ENCODE measurements at regions of chr9 and their contacts with region 1.

Region 1: DNA sequence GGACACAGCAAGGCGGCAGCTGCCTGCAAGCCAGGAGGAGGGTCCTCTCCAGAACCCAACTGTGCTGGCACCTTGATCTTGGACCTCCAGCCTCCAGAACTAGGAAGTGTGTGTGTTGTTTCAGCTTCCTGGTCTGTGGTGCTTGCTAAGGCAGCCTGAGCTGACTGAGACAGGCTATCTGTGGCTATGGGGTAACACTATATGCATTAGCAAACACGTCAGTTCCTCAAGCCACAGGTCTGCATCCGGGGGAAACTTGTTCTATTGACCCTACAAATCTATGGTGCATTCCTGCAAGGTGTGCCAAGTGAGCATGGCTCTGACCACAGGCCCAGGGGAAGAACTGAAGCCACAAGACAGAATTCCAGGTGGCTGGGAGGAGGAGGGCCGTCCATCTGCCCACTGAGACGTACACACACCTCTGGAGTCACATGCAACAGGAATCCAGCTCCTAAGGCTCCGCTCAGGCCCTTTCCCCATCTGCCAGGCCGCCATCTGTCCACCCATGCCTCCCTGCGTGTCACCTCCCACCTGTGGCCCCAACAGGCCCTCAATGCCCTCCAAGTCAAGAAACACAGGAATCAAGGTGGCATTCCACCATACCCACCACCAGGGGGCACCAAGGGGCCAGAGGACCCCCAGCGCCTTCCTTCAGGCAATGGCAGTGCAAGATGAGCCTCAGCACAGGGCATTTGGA is 174.9 kb downstream of the ROR2 start:
- DNase-seq: peak; percentile 37
- H3K4me3 ChIP-seq: no peak overlapping the region
- H3K27ac ChIP-seq: no peak overlapping the region
- H3K4me1 ChIP-seq: peaks cover 23% of the 10 kb centered on the region
- H3K27me3 ChIP-seq: no peaks in the 10 kb centered on the region
- CTCF ChIP-seq: peak; percentile 70 to 81

Region 2: DNA sequence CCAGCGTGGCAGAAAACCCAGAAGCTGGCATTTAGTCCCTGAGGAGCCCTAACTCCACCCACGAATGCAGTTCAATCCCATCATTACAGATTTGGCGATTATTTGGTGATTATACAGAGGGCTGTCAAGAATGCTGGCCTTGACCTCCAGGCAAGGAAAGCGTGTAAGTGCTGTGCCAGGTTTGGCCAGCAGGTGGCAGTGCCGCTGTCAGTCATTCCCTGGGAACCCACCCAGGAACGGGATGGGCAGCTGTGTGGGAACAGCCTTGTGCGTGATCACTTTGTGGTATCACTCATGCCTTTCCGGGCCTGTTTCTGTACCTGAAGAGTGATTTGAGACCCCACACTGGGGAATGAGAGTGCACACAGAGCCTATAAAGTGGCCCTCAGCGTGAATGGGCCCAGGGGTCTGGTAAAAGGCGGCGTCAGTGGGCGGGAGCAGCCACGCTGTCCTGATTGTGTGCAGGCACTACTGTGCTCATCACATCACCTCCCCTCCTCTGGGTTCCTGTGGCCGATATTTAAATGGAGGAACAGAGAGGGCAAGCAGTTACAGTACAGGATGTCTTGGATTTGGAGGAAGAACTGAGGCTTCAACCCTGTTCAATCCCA is 40.7 kb before region 1 on chr9:
- CTCF ChIA-PET with region 1: no interaction called
- dilution Hi-C with region 1: no loop called
- in situ Hi-C with region 1: no loop called
- intact Hi-C with region 1: no loop called
- DNase-seq: peak; percentile 14
- H3K4me3 ChIP-seq: no peak overlapping the region
- H3K27ac ChIP-seq: no peak overlapping the region
- H3K4me1 ChIP-seq: no peaks in the 10 kb centered on the region
- H3K27me3 ChIP-seq: no peaks in the 10 kb centered on the region
- CTCF ChIP-seq: peak; percentile 98 to 99

Region 3: GRCh38 chr9:91824601-91825305 is 49.6 kb after region 1 on chr9:
- CTCF ChIA-PET with region 1: no interaction called
- dilution Hi-C with region 1: loop called (anchors 5 kb)
- in situ Hi-C with region 1: no loop called
- intact Hi-C with region 1: no loop called
- DNase-seq: no peak
- H3K4me3 ChIP-seq: no peak overlapping the region
- H3K27ac ChIP-seq: no peak overlapping the region
- H3K4me1 ChIP-seq: peaks cover 6% of the 10 kb centered on the region
- H3K27me3 ChIP-seq: no peaks in the 10 kb centered on the region
- CTCF ChIP-seq: no peak

Region 4: DNA sequence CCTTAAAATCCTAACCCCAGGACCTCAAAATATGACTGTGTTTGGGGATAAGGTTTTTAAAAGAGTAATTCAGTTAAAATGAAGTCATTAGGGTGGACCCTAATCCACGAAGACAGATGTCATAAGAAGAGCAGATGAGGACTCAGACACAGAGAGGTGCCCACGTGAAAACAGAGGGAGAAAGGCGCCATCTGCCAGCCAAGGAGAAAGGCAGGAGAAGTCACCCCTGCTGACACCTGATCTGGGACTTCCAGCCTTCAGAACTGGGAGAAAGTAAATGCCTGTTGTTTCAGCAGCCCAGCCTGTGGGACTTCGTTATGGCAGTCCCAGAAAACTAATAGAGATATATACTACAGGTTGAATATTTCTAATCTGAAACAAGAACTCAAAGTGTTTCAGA is 107.5 kb after region 1 on chr9:
- CTCF ChIA-PET with region 1: no interaction called
- dilution Hi-C with region 1: no loop called
- in situ Hi-C with region 1: loop called in 1 of 2 experiments (anchors 25 kb)
- intact Hi-C with region 1: loop called (anchors 1 kb)
- DNase-seq: no peak
- H3K4me3 ChIP-seq: no peak overlapping the region
- H3K27ac ChIP-seq: no peak overlapping the region
- H3K4me1 ChIP-seq: no peaks in the 10 kb centered on the region
- H3K27me3 ChIP-seq: no peaks in the 10 kb centered on the region
- CTCF ChIP-seq: peak; percentile 8 to 44

Region 5: DNA sequence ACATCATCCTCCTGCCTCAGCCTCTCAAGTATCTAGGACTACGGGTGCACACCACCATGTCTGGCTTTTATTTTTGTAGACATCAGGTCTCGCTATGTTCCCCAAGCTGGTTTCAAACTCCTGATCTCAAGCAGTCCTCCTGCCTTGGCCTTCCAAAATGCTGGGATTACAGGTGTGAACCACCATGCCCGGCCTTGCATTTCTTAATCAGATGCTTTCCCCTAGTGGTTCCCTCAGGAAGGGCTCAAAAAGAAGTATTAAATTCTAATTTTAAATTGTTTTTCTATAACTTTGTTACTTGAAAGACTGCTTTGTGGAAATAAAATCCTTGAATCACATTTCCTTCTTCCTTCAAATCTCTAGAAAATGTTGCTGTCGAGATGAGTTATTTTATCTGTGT is 254.4 kb after region 1 on chr9:
- CTCF ChIA-PET with region 1: no interaction called
- dilution Hi-C with region 1: no loop called
- in situ Hi-C with region 1: no loop called
- intact Hi-C with region 1: loop called (anchors 10 kb)
- DNase-seq: no peak
- H3K4me3 ChIP-seq: no peak overlapping the region
- H3K27ac ChIP-seq: no peak overlapping the region
- H3K4me1 ChIP-seq: peaks cover 3% of the 10 kb centered on the region
- H3K27me3 ChIP-seq: no peaks in the 10 kb centered on the region
- CTCF ChIP-seq: peak in 1 of 2 donors; percentile 31

Measured in mammary epithelial cell (primary cell).